Activated T-helper 2 cell treated with anti-CD3 and anti-CD28 coated beads, Interferon-gamma antibody, Interleukin-2, Interleukin-4, amounts not matched to agents 10 μg/mL and 5 μg/mL and 100 μg/mL, durations not matched to agents 14 hours and 24 hours and 36 hours (primary cell): ENCODE measurements at regions of chr19 and their contacts with region 1.

Region 1: DNA sequence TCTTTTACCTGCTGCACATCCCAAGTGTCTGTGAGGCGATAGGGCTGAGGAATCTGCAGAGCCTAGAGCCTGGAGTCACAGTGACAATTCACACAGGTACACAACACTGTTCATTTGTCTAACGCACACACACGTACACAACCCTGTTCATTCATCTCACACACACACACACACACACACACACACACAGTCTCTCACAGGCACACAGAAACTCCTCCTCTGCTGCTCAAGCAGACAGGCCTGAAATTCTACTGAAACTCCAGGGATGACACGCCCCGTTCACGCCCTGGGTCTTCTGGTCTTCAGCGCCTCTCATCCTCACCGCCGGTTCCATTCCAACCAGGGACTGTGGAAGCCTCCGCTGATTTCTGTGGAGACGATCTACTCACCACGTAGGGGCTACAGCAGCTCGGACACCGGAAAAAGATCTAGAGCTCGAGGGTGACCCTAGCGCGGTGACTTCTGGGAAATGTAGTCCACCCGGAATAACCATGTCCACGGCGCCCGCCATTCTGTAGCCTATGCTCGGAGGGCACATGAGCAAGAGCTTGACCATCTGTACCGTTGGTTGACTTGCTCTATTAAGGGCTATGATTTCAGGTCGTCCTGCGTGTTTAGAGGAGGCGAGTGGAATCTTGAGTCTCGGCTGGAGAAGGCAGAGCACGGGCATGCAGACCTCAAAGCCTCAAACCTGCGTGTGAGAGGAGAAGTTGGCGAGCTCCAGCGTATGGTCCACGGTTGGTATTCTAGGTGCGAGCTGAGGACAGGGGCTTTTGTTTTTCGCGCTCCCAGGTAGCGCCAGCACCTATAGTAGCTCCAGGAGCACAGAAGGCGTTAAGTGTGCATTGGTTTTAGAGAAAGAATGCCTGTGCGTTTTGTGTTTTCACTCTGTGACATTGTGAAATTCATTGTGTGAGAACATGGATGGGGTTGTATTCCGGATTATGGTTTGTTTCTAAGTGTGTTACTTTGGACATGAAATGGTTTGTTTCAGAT is 33.4 kb downstream of the ZNF45 start:
- DNase-seq: peak; percentile 40
- H3K4me3 Mint-ChIP-seq: peak overlapping the region; percentile 86
- H3K27ac Mint-ChIP-seq: peak overlapping the region; percentile 45
- H3K4me1 Mint-ChIP-seq: peaks cover 11% of the 10 kb centered on the region
- H3K27me3 Mint-ChIP-seq: no peaks in the 10 kb centered on the region

Region 2: GRCh38 chr19:43826787-43827754 is 74.6 kb before region 1 on chr19 and contains the start of gene ZNF283:
- intact Hi-C with region 1: loop called (anchors 5 kb)
- DNase-seq: peak; percentile 74
- H3K4me3 Mint-ChIP-seq: peak within 1 kb of the TSS; percentile 88
- H3K27ac Mint-ChIP-seq: peak within 1 kb of the TSS; percentile 54
- H3K4me1 Mint-ChIP-seq: peaks cover 17% of the 10 kb centered on the region
- H3K27me3 Mint-ChIP-seq: peaks cover 1% of the 10 kb centered on the region
- total RNA-seq, gene ZNF283: 3.6 and 4.6 TPM in 2 replicates

Region 3: GRCh38 chr19:43923875-43924274 is 22.2 kb after region 1 on chr19:
- intact Hi-C with region 1: no loop called
- DNase-seq: no peak
- H3K4me3 Mint-ChIP-seq: no peak overlapping the region
- H3K27ac Mint-ChIP-seq: no peak overlapping the region
- H3K4me1 Mint-ChIP-seq: no peaks in the 10 kb centered on the region
- H3K27me3 Mint-ChIP-seq: no peaks in the 10 kb centered on the region